ENCODE measurements at regions of chr20 and their contacts with region 1.

Region 1: GRCh38 chr20:3045816-3046676 is at the start of gene MRPS26:
- DNase-seq: peak; percentile 55 to 94
- H3K4me3 ChIP-seq: peak within 1 kb of the TSS; percentile 89 to 93
- H3K27ac ChIP-seq: peak within 1 kb of the TSS; percentile 91 to 92
- H3K4me1 ChIP-seq: peaks cover 7 to 21% of the 10 kb centered on the region in 2 donors
- H3K27me3 ChIP-seq: no peaks in the 10 kb centered on the region
- CTCF ChIP-seq: no peak
- total RNA-seq, gene MRPS26: 56.4 TPM

Region 2: DNA sequence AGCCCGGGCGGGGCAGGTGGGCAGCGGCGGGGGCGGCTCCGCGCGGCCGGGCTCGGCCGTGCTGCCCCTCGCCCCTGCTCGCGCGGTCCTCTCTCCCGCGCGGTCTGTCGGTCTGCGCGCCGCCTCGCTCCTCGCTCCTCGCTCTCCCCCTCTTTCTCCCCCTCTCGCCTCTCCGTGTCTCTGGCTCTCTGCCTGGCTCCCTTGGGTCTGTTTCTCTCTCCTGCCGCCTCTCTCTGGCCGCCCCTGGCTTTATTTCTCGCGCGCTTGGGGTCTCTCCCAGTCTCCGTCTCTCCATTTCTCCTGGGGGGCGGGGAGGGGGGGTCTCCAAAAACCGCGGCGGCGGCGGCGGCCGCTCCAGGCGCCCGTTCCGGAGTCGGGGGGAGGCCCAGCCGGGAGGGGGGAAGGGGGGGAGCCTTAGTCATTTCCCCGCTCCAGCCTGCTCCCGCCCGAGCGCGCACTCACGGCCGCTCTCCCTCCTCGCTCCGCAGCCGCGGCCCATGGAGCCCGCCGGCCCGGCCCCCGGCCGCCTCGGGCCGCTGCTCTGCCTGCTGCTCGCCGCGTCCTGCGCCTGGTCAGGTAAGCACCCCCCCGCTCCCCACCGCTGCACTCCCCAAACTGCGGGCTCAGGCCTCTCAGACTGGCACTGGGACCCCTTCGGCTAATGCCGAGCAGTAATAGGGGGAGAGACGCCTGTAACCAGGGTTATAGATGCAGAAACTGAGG is 1150.9 kb before region 1 on chr20 and contains the start of gene SIRPA:
- intact Hi-C with region 1: loop called (anchors 10 kb)
- DNase-seq: peak in 1 of 2 donors; percentile 84
- H3K4me3 ChIP-seq: peak within 1 kb of the TSS; percentile 80 to 97
- H3K27ac ChIP-seq: peak within 1 kb of the TSS; percentile 97
- H3K4me1 ChIP-seq: peaks cover 6 to 66% of the 10 kb centered on the region in 2 donors
- H3K27me3 ChIP-seq: no peaks in the 10 kb centered on the region
- CTCF ChIP-seq: no peak
- total RNA-seq, gene SIRPA: 72.8 TPM

Region 3: DNA sequence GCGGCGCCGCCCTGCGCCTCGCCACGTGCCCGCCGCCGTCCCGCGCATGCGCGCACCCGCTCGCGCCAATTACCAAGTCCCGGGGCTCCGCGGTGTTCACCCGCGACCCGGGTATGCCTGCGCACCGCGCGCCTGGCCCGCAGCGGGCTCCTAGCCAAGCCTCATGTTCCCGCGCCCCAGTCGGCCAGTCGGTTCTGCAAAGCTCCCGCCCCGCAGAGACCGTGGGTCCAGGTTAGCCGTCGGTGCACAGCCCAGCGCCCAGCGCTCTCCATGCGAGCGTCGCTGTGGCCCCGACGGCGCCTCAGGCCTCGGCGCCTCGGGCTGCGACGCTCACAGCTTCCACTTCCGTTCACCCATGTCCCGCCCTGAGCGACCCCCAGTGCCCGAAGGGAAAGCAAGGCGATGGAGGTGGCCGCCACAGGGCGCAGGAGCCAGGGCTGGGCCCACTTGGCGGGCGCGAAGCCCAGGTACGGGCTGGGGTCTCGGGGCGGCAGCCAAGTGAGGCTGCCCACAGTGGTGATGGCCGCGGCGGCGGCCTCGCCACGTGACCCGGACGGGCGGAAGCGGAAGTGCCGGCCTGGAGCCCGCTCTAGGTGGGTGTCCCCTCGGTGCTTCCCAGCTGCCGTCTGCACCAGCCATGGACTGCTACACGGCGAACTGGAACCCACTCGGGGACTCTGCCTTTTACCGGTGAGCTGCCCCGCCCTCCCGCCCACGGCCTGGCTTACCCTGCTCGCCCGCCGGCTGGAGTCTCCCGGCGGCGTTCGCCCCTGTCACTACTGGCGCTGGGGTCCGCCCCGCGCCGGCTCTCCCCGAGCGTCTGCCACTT is 205.7 kb before region 1 on chr20 and contains the starts of genes PCED1A and VPS16:
- intact Hi-C with region 1: loop called (anchors 10 kb)
- DNase-seq: peak; percentile 37 to 92
- H3K4me3 ChIP-seq: peak within 1 kb of the TSS; percentile 73 to 87
- H3K27ac ChIP-seq: peak within 1 kb of the TSS; percentile 86 to 89
- H3K4me1 ChIP-seq: peaks cover 5% of the 10 kb centered on the region in 2 donors
- H3K27me3 ChIP-seq: no peaks in the 10 kb centered on the region
- CTCF ChIP-seq: no peak
- total RNA-seq, gene PCED1A: 49.7 TPM
- total RNA-seq, gene VPS16: 61.1 TPM

Region 4: GRCh38 chr20:3173610-3174441 is 127.8 kb after region 1 on chr20:
- intact Hi-C with region 1: loop called (anchors 5 kb)
- DNase-seq: peak in 1 of 2 donors; percentile 93
- H3K4me3 ChIP-seq: peak overlapping the region; percentile 85 to 88
- H3K27ac ChIP-seq: peak overlapping the region; percentile 77 to 78
- H3K4me1 ChIP-seq: peaks cover 0 to 4% of the 10 kb centered on the region in 2 donors
- H3K27me3 ChIP-seq: no peaks in the 10 kb centered on the region
- CTCF ChIP-seq: peak; percentile 15 to 24 (median 23)

Region 5: DNA sequence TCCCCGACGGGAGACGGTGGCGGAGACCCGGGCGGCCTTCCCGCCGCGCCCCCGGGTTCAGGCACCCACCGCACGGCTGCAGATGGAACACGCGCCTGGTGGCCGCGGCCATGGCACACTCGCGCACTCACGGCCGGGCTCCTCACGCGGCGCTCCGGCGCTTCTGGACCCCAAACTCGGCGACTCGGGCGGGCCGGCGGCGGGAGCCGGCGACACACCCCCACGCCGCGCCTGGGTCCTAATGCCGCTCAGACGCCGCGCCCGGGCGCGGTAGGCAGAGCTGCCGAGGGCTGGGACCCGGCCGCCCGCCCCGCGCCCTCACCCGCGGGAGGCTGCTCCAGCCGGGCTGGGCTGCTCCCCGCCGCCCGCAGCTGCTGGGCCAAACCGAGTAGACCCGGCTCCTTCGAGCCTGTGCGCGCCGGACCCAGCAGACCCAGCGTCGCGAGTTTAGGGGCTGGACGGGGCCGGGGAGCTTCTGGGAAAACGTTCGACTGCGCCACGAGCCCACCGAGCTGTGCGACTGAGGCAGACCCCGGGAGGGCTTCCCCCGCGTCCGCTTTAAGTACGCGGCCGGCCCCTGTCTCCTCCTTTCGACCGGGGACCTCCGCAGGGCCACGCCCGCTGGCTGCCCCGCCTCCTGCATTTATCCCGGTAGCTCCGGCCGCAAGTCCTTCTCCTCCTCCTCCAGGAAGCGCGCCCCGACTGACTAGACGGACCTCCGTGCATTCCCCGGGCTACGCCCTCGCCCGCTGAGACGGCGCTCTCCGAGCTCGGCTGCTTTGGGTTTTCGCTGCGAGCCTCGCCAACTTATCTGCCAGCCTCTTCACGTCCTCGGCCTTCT is 193.2 kb after region 1 on chr20 and contains the start of gene SLC4A11:
- intact Hi-C with region 1: no loop called
- DNase-seq: peak in 1 of 2 donors; percentile 76
- H3K4me3 ChIP-seq: peak within 1 kb of the TSS; percentile 78 to 92
- H3K27ac ChIP-seq: no peak within 1 kb of the TSS
- H3K4me1 ChIP-seq: peaks cover 8 to 11% of the 10 kb centered on the region in 2 donors
- H3K27me3 ChIP-seq: peaks cover 9% of the 10 kb centered on the region
- CTCF ChIP-seq: no peak
- total RNA-seq, gene SLC4A11: 1.6 TPM

Region 6: GRCh38 chr20:3407771-3408637 is 362.0 kb after region 1 on chr20:
- intact Hi-C with region 1: loop called (anchors 10 kb)
- DNase-seq: peak in 1 of 2 donors; percentile 84
- H3K4me3 ChIP-seq: peak overlapping the region; percentile 89 to 93
- H3K27ac ChIP-seq: peak overlapping the region; percentile 95
- H3K4me1 ChIP-seq: peaks cover 0 to 7% of the 10 kb centered on the region in 2 donors
- H3K27me3 ChIP-seq: no peaks in the 10 kb centered on the region
- CTCF ChIP-seq: no peak

Region 7: DNA sequence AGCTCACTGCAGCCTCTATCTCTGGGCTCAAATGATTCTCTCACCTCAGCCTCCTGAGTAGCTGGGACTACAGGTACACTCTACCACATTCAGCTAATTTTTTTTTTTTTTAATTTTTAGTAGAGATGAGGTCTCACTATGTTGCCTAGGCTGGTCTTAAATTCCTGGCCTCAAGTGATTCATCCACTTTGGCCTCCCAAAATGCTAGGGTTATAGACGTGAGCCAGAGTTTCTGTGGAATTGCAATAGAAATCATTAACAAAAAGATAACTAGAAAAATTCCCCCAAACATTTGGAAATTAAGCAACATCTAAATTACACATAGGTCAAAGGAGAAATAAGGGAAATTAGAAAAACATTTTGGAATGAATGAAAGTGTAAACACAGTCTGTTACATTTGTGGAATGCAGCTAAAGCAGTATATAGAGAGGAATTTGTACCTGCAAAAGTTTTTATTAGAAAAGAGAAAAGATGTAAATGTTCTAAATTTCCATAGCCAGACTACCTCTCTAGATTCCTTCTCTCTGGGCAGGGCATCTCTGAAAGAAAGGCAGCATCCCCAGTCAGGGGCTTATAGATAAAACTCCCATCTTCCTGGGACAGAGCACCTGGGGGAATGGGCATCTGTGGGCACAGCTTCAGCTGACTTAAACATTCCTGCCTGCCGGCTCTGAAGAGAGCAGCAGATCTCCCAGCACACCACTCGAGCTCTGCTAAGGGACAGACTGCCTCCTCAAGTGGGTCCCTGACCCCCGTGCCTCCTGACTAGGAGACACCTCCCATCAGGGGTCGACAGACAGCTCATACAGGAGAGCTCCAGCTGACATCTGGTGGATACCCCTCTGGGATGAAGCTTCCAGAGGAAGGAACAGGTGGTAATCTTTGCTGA is 476.1 kb after region 1 on chr20:
- intact Hi-C with region 1: no loop called
- DNase-seq: no peak
- H3K4me3 ChIP-seq: no peak overlapping the region
- H3K27ac ChIP-seq: no peak overlapping the region
- H3K4me1 ChIP-seq: no peaks in the 10 kb centered on the region
- H3K27me3 ChIP-seq: no peaks in the 10 kb centered on the region
- CTCF ChIP-seq: no peak

Measured in ascending aorta (tissue), 2 donors.